Heart left ventricle (tissue), 16 donors: ENCODE measurements at regions of chr22 and their contacts with region 1.

Region 1: GRCh38 chr22:46684706-46685105 is 53.3 kb downstream of the CERK start:
- DNase-seq: peak in 4 of 5 donors; percentile 57 to 76 (median 68)
- ATAC-seq: peak; percentile 59 to 65 (median 60)
- H3K4me3 ChIP-seq: no peak overlapping the region
- H3K27ac ChIP-seq: peak overlapping the region; percentile 75 to 93 (median 84)
- H3K4me1 ChIP-seq: peaks cover 11 to 67% (median 54%) of the 10 kb centered on the region in 12 donors
- H3K27me3 ChIP-seq: no peaks in the 10 kb centered on the region
- CTCF ChIP-seq: no peak
- POLR2A ChIP-seq: no peak

Region 2: DNA sequence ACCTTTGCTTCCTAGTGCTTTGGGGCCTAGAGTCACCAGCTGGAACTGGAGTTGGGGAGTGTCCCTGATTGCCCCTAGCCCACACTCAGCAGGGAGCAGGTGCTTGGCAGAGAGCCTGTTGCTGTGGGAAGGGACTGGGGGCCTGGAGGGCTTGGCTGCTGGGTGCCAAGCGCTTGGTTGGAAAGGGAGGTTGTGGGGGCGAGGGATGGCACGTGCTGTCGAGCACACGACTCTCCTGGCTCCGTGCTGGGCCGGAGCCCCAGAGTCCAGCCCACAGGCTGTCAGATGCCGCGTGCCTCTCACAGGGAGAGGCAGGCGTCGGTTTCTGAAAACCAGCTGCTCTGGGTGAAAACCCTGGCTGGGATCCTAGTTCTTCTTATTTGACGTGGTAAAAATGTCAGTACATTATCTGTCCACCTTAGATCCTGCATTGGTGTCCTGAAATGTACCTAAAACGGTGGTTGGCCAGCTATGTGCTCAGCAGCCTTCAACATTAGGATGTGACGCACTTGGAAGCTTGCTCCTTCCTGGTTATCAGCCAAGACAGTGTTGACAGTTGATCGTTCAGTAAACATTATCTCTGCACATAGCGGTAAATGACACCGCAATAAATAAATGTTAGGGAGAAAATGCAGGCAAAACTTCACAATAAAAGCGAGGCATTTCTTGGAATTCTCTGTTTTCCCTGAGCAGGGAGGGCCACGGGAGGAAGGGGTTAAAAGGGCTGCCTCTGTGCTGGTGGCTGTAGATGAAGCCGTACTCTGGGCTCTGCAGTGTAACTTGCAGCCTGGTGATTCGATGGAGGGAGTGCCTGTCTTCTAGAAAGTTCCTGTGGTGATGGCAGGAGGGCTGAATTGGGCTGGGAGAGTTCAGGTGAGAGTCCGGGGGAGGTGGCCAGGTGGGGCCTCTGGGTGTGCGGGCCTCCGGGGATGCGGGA is 35.3 kb before region 1 on chr22:
- intact Hi-C with region 1: loop called in 1 of 10 experiments (anchors 5 kb)
- DNase-seq: peak in 4 of 5 donors; percentile 66 to 88 (median 74)
- ATAC-seq: peak; percentile 69 to 79 (median 76)
- H3K4me3 ChIP-seq: no peak overlapping the region
- H3K27ac ChIP-seq: peak overlapping the region; percentile 75 to 98 (median 90)
- H3K4me1 ChIP-seq: peaks cover 24 to 92% (median 72%) of the 10 kb centered on the region in 12 donors
- H3K27me3 ChIP-seq: no peaks in the 10 kb centered on the region
- CTCF ChIP-seq: no peak
- POLR2A ChIP-seq: no peak

Region 3: DNA sequence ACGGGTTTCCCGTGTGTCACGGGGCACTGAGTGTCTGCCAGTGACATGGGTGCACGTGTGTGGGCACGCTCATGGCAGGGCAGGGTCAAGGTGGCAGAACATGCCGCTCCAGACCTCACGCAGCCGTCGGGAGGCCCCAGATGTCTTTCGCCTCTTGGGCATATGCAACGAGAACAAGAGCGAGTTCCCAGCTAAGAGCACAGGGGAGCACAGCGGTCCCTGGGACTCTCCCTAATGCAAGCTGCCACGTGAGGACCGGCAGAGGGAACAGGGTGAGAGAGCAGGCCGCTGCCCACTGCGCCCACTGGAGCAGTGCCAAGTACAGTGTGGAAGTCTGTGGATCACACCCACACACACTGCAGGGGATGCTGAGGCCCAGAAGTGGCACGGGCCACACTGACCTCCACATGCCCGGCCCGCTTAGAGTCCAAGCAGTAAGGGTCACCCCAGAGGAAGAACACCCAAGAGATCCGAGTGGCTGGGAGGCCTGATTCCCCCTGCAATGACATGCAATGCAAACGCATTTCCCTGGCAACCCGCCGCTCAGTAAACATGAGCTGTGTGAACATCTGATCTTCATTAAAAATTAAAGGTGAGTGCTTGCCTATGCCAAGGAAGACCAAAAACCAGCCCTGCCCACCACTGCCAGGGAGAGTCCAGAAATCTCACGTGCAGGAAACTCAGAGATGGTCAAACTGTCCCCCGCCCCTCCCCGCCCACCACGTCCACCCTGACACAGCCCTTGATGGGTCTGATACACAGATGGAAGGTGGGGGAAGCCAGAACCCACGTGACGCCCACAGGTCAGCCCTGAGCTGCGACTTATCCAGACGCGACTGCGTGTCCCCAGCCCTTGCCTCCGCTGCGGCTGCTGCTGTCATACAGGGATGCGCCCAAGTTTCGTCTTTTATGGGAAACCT is 41.6 kb after region 1 on chr22:
- intact Hi-C with region 1: loop called in 5 of 10 experiments (anchors 2 to 5 kb)
- DNase-seq: peak in 2 of 5 donors; percentile 55 to 61
- ATAC-seq: peak; percentile 12 to 38 (median 29)
- H3K4me3 ChIP-seq: no peak overlapping the region
- H3K27ac ChIP-seq: peak overlapping the region in 7 of 12 donors; percentile 11 to 68 (median 24)
- H3K4me1 ChIP-seq: peaks cover 24 to 71% (median 60%) of the 10 kb centered on the region in 12 donors
- H3K27me3 ChIP-seq: no peaks in the 10 kb centered on the region
- CTCF ChIP-seq: no peak
- POLR2A ChIP-seq: no peak

Region 4: DNA sequence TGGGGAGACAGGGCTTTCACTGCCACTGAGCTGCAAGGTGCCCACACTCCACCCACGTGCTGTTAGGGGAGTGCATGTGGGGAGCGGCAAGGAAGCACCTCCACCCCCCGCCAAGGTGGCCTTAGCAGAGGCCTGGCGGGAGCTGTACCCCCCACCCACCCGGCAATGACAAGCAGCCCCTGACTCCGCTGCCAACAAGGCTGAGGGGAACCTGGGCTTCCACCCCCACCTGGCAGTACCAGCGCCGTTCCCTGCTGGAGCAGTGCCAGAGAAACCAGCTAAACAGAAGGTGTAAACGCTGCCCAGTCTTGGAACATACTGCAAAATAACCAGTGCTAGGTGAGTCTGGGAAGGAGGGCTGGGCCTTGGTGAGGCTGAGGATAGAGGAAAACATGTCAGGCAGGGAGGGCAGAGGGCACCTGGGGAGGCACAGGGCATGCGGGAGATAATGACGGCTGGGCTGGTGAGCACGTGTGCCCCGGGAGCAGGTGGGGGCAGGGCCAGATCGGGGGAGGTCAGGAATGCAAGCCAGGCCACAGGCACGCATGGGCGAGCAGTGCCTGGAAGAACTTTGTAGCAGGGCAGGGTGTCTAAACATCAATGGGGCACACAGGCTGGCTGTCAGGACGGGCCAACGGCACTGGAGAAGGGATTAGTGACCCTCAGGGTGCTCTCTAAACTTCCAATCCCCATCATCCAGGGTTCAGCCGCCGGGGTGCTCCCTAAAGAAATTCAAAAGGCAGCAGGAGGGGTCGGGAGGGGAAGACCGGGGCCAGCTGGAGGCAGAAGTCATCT is 46.7 kb after region 1 on chr22:
- intact Hi-C with region 1: loop called in 7 of 10 experiments (anchors 2 to 5 kb)
- DNase-seq: peak in 4 of 5 donors; percentile 68 to 79 (median 72)
- ATAC-seq: peak; percentile 53 to 71 (median 64)
- H3K4me3 ChIP-seq: no peak overlapping the region
- H3K27ac ChIP-seq: peak overlapping the region; percentile 43 to 99 (median 73)
- H3K4me1 ChIP-seq: peaks cover 28 to 97% (median 85%) of the 10 kb centered on the region in 12 donors
- H3K27me3 ChIP-seq: no peaks in the 10 kb centered on the region
- CTCF ChIP-seq: no peak
- POLR2A ChIP-seq: peak in 1 of 2 donors; percentile 15

Region 5: DNA sequence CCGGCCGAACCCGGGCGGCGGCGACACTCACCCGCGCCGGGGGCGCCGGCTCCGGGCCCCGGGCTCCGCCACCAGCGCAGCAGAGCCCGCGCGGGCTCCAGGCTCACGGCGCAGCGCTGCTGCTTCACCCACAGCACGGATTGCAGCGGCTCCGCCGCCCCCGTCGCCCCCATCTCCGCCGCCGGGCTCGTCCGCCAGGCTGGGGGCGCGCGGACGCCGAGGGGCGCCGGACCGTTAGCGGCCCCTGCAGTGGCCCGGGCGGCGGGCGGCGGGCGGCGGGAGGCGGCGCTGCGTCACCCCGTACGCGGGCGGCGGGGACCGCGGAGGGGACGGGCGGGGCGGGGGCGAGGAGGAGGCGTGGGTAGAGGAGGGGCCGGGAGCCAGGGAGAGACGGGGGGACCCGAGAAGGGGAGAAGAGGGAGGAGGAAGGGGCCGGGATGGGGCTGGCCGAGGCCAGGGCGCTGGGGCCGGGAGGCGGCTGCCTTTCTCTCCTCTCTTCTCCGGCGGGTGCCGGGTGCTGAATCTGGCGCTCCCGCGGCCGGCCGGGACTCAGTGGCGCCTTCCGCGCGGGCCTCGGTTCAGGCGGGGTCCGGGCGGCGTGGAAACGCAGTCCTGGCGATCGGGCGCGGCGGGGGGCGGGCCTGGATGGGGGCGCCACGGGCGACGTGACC is 53.4 kb after region 1 on chr22 and contains the start of gene CERK:
- intact Hi-C with region 1: loop called in 3 of 10 experiments (anchors 5 kb)
- DNase-seq: peak; percentile 86 to 94 (median 90)
- ATAC-seq: peak; percentile 52 to 77 (median 70)
- H3K4me3 ChIP-seq: peak within 1 kb of the TSS; percentile 57 to 100 (median 92)
- H3K27ac ChIP-seq: peak within 1 kb of the TSS; percentile 90 to 100 (median 98)
- H3K4me1 ChIP-seq: peaks cover 9 to 87% (median 56%) of the 10 kb centered on the region in 12 donors
- H3K27me3 ChIP-seq: no peaks in the 10 kb centered on the region
- CTCF ChIP-seq: no peak
- POLR2A ChIP-seq: peak in 1 of 2 donors; percentile 87
- total RNA-seq, gene CERK: 52.6 to 125 (median 72.3) TPM